PC-3 (cell line): ENCODE measurements at regions of chr16 and their contacts with region 1.

Region 1: GRCh38 chr16:49216593-49216992 is 65.0 kb downstream of the CBLN1 start:
- DNase-seq: no peak
- ATAC-seq: no peak
- H3K4me3 ChIP-seq: no peak overlapping the region
- H3K27ac ChIP-seq: no peak overlapping the region
- H3K4me1 ChIP-seq: no peaks in the 10 kb centered on the region
- H3K27me3 ChIP-seq: no peaks in the 10 kb centered on the region
- CTCF ChIP-seq: no peak

Region 2: DNA sequence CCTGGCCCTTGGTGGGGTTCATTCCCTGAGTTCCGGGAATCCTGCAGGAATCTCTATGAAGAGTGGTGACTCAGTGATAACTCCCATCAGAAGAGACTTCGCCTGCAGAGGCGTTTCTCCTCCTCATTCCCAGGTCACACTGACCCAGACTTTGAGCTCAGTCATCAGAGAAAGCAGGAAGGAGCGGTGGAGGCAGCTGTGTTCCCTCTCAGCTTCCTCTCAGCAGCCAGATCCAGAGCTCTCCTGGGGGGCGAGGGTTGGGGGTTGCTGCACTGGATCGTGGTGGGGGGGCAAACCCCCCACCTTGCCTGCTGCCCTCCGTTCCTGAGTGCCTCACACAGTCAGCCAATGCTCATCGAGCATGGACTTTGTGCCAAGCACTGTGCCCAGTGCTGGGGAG is 206.2 kb before region 1 on chr16:
- CTCF ChIA-PET with region 1: interaction called, 13 read pairs
- POLR2A ChIA-PET with region 1: no interaction called
- intact Hi-C with region 1: no loop called
- DNase-seq: no peak
- ATAC-seq: no peak
- H3K4me3 ChIP-seq: no peak overlapping the region
- H3K27ac ChIP-seq: no peak overlapping the region
- H3K4me1 ChIP-seq: no peaks in the 10 kb centered on the region
- H3K27me3 ChIP-seq: no peaks in the 10 kb centered on the region
- CTCF ChIP-seq: no peak